HEK293T (cell line): ENCODE measurements at regions of chr17 and their contacts with region 1.

Region 1: DNA sequence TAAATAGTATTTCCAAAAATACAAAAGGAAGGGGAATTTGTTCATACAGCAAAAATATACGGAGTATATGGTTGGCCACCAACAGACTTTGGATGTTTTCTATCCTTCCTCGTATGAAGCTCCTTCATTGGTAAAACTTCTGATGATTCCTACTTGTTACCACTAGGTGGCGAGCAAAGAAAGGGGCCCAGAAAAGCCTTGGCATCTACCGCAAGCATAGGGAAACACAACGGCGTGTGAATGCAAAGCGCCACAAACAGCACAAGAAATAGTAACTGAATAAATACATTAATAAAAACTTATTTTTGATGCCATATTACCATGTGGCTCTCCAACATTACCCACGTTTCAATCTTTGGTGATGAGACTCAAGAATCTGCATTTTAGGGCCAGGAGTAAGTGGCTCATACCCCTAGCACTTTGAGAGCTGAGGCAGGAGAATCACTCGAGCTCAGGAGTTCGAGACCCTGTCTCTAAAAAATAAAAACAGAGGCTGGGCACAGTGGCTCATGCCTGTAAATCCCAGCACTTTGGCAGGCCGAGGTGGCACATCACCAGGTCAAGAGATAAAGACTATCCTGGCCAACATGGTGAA is 34.5 kb downstream of the YWHAE start:
- DNase-seq: peak; percentile 67

Region 2: GRCh38 chr17:1331708-1332107 is 33.8 kb before region 1 on chr17:
- CTCF ChIA-PET with region 1: no interaction called
- POLR2A ChIA-PET with region 1: no interaction called
- DNase-seq: no peak

Region 3: DNA sequence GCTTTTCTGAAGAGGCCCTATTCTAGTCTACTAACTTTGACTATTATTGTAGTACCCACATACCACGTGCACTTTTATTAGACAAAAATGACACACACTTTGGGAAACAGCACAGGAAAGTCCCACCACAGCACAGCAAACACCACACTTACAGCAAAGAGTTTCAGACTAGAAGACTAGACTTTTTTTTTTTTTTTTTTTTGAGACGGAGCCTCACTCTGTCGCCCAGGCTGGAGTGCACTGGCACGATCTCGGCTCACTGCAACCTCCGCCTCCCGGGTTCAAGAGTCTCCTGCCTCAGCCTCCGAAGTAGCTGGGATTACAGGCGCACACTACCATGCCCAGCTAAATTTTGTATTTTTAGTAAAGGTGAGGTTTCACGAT is 14.4 kb after region 1 on chr17:
- CTCF ChIA-PET with region 1: interaction called, 14 read pairs
- POLR2A ChIA-PET with region 1: interaction called, 5 read pairs
- DNase-seq: no peak

Region 4: GRCh38 chr17:1390433-1391367 is 25.2 kb after region 1 on chr17:
- CTCF ChIA-PET with region 1: interaction called, 10 read pairs
- POLR2A ChIA-PET with region 1: no interaction called
- DNase-seq: no peak

Region 5: DNA sequence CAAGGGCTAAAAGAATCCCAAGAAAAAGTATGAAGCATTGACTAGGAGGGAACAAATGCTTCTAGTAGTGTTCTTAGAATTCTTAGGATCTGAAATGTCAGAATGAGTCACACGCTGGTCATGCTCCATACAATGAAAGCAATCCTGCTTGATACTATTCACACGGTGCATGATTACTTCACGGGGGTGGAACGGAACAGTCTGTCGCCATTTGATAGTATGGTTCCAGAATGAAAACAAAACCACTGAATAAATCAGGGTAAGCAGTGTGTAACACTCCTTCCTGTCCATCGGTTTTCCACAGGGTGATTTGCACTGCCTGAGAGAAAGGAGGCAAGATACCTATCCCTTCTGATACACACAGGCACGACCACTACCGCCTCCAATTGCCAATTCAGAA is 57.4 kb after region 1 on chr17:
- CTCF ChIA-PET with region 1: no interaction called
- POLR2A ChIA-PET with region 1: no interaction called
- DNase-seq: no peak

Region 6: DNA sequence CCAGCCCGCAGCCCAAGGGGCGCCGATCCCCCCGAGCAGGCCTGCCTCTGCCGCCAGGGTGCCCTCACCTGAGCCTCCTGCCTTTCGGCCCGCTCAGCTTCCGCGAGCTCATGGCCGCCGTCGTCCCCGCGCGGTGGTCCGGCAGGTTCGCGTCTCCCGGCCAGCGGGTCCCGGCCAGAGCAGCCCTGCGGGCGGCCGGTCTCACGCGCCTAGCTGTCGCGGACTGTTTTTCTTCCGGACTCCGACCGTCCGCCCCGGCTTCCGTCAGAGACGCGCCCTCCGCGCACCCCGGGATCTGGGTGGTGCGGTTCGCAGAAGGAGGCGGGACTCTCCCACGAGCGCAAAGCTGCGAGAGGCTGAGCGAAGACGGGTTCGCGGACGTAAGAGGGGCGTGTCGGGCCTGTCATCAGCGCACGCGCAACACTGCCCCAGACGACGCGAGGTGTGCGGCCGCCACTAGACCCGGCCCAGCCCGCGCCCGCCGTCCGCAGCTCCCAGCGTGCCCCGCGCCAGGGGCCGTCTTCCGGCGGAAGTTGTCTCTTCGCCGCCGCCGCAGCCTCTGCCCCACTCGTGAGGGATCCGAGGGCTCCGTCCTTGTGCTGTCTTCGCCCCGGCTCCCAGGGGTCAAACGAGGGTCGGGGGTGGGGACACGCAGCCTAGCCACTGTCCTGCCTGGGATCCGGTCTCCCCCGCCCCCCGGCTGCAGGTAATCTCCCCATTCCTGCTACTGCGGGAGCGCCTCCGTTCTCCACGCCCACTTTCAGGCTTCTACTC is 151.0 kb after region 1 on chr17 and contains the start of gene INPP5K:
- CTCF ChIA-PET with region 1: interaction called, 15 read pairs
- POLR2A ChIA-PET with region 1: interaction called, 3 read pairs
- DNase-seq: peak; percentile 99